B cell (primary cell): ENCODE measurements at regions of chr11 and their contacts with region 1.

Region 1: DNA sequence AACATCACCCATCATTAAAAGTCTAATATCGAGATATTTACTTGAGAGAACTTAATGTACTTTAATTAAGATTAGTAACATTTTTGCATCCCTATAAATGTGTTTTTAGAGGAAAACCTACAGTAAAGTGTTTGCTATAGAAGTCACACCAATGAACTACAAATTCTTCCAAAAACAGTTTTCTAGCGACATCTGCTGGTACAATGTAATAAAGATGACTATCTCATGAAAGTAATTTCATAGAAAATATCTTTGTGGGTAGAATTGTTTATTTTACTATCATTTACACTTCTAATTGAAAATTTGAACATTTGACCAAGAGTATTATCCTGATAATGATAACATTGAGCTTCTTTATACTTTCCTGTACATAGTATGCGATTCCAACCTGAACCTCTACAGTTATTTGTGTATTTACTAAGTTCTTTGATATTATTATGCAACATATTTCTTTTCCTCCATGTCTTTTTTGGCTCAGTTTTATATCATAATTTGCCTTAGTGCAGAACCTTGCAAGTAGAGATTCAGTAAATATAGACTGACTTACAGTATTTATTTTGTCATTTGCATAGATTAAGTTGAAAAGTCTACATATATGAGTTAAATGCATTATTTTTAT is 252.7 kb downstream of the TMEM135 start:
- DNase-seq: peak; percentile 55
- ATAC-seq: no peak
- H3K4me3 ChIP-seq: no peak overlapping the region
- H3K4me3 Mint-ChIP-seq: no peak overlapping the region
- H3K27ac ChIP-seq: no peak overlapping the region
- H3K27ac Mint-ChIP-seq: no peak overlapping the region
- H3K4me1 ChIP-seq: no peaks in the 10 kb centered on the region
- H3K4me1 Mint-ChIP-seq: no peaks in the 10 kb centered on the region
- H3K27me3 ChIP-seq: no peaks in the 10 kb centered on the region
- H3K27me3 Mint-ChIP-seq: no peaks in the 10 kb centered on the region
- CTCF ChIP-seq: peak; percentile 81

Region 2: GRCh38 chr11:86869966-86870570 is 420.3 kb before region 1 on chr11:
- CTCF ChIA-PET with region 1: interaction called, 10 read pairs
- POLR2A ChIA-PET with region 1: no interaction called
- intact Hi-C with region 1: no loop called
- DNase-seq: peak; percentile 19
- ATAC-seq: peak; percentile 47
- H3K4me3 ChIP-seq: no peak overlapping the region
- H3K4me3 Mint-ChIP-seq: no peak overlapping the region
- H3K27ac ChIP-seq: no peak overlapping the region
- H3K27ac Mint-ChIP-seq: no peak overlapping the region
- H3K4me1 ChIP-seq: no peaks in the 10 kb centered on the region
- H3K4me1 Mint-ChIP-seq: no peaks in the 10 kb centered on the region
- H3K27me3 ChIP-seq: no peaks in the 10 kb centered on the region
- H3K27me3 Mint-ChIP-seq: peaks cover 8% of the 10 kb centered on the region
- CTCF ChIP-seq: peak; percentile 82

Region 3: DNA sequence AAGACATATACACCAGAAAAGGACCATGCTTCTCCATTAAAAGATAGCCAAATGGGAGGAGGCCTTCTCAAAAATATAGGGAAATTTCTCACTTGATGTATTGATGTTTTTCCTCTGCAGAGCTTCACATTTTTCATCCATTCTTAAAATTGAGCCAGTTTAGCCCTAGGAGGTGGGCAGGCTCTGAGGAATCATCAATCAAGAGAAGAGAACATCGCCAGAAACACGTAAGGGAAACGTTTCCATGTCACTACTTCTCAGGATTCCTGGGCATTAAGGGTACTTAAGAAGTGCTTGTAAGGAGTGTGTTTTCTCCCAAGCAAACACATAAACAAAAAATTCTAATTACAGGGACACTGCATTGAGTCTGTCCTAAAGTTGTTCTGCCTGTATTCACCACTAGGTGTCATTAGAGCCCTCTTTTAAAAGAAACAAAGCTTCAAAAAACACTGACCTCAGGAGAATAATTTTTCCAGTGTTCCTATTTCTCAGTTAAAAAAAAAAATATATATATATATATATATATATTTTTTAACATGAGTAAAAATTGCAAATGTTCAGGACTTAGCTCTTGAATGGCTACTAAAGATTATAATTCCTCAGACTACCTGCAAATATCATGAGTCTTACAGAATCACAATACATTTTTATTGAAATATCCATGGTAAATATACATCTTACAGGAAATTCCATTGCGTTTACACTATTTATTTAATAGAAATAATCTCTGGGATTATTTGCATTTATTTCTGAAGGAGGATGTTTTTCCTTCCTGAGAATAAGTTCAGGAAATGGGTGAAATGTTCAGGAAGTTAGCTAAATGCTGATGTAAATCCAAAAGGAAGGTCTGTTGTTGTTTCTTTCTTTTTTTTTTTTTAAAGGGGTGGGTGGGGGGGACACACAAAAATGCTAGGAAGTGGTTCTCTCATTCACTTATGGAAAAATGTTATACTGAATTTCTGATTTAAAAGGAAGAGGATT is 351.2 kb before region 1 on chr11:
- CTCF ChIA-PET with region 1: interaction called, 123 read pairs
- POLR2A ChIA-PET with region 1: no interaction called
- intact Hi-C with region 1: no loop called
- DNase-seq: peak; percentile 49
- ATAC-seq: no peak
- H3K4me3 ChIP-seq: no peak overlapping the region
- H3K4me3 Mint-ChIP-seq: no peak overlapping the region
- H3K27ac ChIP-seq: no peak overlapping the region
- H3K27ac Mint-ChIP-seq: no peak overlapping the region
- H3K4me1 ChIP-seq: no peaks in the 10 kb centered on the region
- H3K4me1 Mint-ChIP-seq: no peaks in the 10 kb centered on the region
- H3K27me3 ChIP-seq: no peaks in the 10 kb centered on the region
- H3K27me3 Mint-ChIP-seq: peaks cover 10% of the 10 kb centered on the region
- CTCF ChIP-seq: peak; percentile 76

Region 4: DNA sequence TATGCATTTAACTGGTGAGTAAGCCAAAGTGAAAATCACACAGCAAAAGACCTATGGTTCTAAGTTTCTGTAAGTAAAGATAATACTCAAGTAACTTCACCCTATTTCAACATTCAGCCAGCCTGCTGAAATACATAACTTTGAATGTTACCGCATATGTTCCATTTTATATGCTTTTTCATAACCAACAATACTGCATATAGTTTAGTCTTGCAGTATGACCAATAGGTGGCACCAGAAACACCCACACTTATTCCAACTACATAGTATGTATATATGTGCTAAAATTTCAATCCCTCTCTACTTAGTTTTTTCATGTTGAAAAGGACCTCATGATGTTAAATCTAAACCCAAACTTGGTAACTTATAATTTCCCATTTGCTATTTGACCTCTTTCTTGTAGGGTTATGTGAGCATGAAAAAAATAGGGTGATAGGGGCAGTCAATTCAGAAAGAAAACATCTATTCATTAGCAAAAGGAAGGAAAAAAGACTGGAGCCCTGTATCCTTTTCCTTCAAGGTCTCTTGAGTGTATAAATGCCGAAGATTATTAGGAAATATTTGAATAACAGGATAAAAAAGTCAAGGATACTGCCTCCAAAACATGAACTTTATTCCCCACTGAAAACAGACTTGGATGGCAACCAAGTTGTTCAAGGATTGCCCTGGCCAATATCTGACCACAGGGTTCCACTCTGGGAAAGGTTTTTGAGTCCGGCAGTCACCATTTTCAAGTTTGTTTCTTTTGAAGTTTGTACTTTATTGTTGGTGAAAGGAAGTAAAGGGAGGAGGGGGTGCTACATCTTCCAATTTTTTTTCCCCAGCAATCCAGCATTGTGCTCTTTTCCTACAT is 311.4 kb before region 1 on chr11:
- CTCF ChIA-PET with region 1: interaction called, 4 read pairs
- POLR2A ChIA-PET with region 1: no interaction called
- intact Hi-C with region 1: loop called (anchors 1 kb)
- DNase-seq: peak; percentile 44
- ATAC-seq: no peak
- H3K4me3 ChIP-seq: no peak overlapping the region
- H3K4me3 Mint-ChIP-seq: no peak overlapping the region
- H3K27ac ChIP-seq: no peak overlapping the region
- H3K27ac Mint-ChIP-seq: no peak overlapping the region
- H3K4me1 ChIP-seq: no peaks in the 10 kb centered on the region
- H3K4me1 Mint-ChIP-seq: no peaks in the 10 kb centered on the region
- H3K27me3 ChIP-seq: no peaks in the 10 kb centered on the region
- H3K27me3 Mint-ChIP-seq: peaks cover 3% of the 10 kb centered on the region
- CTCF ChIP-seq: peak; percentile 72

Region 5: GRCh38 chr11:86999859-87000753 is 290.3 kb before region 1 on chr11:
- CTCF ChIA-PET with region 1: interaction called, 8 read pairs
- POLR2A ChIA-PET with region 1: no interaction called
- intact Hi-C with region 1: loop called (anchors 5 kb)
- DNase-seq: no peak
- ATAC-seq: no peak
- H3K4me3 ChIP-seq: no peak overlapping the region
- H3K4me3 Mint-ChIP-seq: no peak overlapping the region
- H3K27ac ChIP-seq: no peak overlapping the region
- H3K27ac Mint-ChIP-seq: no peak overlapping the region
- H3K4me1 ChIP-seq: no peaks in the 10 kb centered on the region
- H3K4me1 Mint-ChIP-seq: no peaks in the 10 kb centered on the region
- H3K27me3 ChIP-seq: no peaks in the 10 kb centered on the region
- H3K27me3 Mint-ChIP-seq: peaks cover 9% of the 10 kb centered on the region
- CTCF ChIP-seq: no peak

Region 6: GRCh38 chr11:87230995-87231394 is 59.4 kb before region 1 on chr11:
- CTCF ChIA-PET with region 1: no interaction called
- POLR2A ChIA-PET with region 1: no interaction called
- intact Hi-C with region 1: no loop called
- DNase-seq: no peak
- ATAC-seq: no peak
- H3K4me3 ChIP-seq: no peak overlapping the region
- H3K4me3 Mint-ChIP-seq: no peak overlapping the region
- H3K27ac ChIP-seq: no peak overlapping the region
- H3K27ac Mint-ChIP-seq: no peak overlapping the region
- H3K4me1 ChIP-seq: no peaks in the 10 kb centered on the region
- H3K4me1 Mint-ChIP-seq: no peaks in the 10 kb centered on the region
- H3K27me3 ChIP-seq: no peaks in the 10 kb centered on the region
- H3K27me3 Mint-ChIP-seq: no peaks in the 10 kb centered on the region
- CTCF ChIP-seq: no peak

Region 7: DNA sequence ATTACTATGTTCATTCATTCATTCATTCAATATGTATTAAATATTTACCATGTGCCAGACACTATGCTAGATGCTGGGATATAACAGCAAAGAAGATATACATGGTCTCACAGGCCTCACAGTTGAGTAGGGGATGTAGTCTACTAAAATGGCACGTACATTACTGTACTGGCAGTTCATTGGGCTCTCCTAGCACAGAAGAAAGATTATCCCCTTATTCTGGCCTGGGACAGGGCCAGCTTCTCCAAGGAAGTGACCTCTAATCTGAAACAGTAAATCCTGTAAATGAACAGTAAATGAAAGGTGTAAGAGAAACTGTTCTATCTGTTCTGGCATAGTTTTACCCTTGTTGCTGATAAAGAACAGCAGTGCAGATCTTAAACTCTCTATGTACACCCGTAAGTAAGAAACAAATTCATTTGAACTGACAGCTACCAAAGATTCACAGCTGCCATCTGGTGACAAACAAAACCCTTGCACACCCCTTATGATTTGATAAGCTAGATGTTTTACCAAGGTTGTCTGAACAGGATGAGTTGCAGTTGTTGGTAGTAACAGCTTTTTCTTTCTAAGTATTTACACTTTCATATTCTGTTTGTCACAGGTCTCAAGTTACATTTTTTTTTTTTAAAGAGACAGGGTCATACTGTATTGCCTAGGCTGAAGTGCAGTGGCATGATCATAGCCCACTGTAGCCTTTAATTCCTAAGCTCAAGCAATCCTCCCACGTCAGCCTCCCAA is 10.4 kb after region 1 on chr11:
- CTCF ChIA-PET with region 1: interaction called, 14 read pairs
- POLR2A ChIA-PET with region 1: no interaction called
- intact Hi-C with region 1: no loop called
- DNase-seq: no peak
- ATAC-seq: no peak
- H3K4me3 ChIP-seq: no peak overlapping the region
- H3K4me3 Mint-ChIP-seq: no peak overlapping the region
- H3K27ac ChIP-seq: no peak overlapping the region
- H3K27ac Mint-ChIP-seq: no peak overlapping the region
- H3K4me1 ChIP-seq: no peaks in the 10 kb centered on the region
- H3K4me1 Mint-ChIP-seq: no peaks in the 10 kb centered on the region
- H3K27me3 ChIP-seq: no peaks in the 10 kb centered on the region
- H3K27me3 Mint-ChIP-seq: no peaks in the 10 kb centered on the region
- CTCF ChIP-seq: no peak

Region 8: DNA sequence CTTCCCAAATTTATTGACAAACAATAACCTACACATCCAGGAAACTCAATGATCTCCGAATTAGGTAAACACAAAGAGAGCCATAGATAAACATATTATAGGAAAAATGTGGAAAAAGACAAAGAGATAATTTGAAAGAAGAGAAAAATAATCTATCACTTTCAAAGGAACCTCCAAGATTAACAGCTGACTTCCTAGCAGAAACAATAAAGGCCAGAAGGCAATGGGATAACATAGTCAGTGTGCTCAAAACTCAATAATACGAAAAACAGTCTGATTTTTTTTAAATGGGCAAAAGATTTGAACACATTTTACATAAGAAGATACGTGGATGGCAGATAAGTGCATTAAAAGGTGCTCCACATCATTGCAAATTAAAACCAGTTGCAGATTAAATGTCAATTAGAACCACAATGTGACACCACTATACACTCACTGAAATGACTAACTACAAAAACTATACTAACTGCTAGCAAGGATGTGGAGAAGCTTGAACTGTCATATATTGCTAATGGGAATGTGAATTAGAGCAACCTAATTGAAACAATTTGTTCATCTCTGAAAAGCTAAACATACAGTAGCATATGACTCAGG is 47.7 kb after region 1 on chr11:
- CTCF ChIA-PET with region 1: no interaction called
- POLR2A ChIA-PET with region 1: no interaction called
- intact Hi-C with region 1: no loop called
- DNase-seq: no peak
- ATAC-seq: no peak
- H3K4me3 ChIP-seq: no peak overlapping the region
- H3K4me3 Mint-ChIP-seq: no peak overlapping the region
- H3K27ac ChIP-seq: no peak overlapping the region
- H3K27ac Mint-ChIP-seq: no peak overlapping the region
- H3K4me1 ChIP-seq: no peaks in the 10 kb centered on the region
- H3K4me1 Mint-ChIP-seq: no peaks in the 10 kb centered on the region
- H3K27me3 ChIP-seq: no peaks in the 10 kb centered on the region
- H3K27me3 Mint-ChIP-seq: no peaks in the 10 kb centered on the region
- CTCF ChIP-seq: no peak